Ascending aorta (tissue), 2 donors: ENCODE measurements at regions of chr14 and their contacts with region 1.

Region 1: GRCh38 chr14:53767566-53767965 is 189.1 kb downstream of the BMP4 start:
- DNase-seq: no peak
- H3K4me3 ChIP-seq: no peak overlapping the region
- H3K27ac ChIP-seq: no peak overlapping the region
- H3K4me1 ChIP-seq: no peaks in the 10 kb centered on the region
- H3K27me3 ChIP-seq: no peaks in the 10 kb centered on the region
- CTCF ChIP-seq: no peak

Region 2: DNA sequence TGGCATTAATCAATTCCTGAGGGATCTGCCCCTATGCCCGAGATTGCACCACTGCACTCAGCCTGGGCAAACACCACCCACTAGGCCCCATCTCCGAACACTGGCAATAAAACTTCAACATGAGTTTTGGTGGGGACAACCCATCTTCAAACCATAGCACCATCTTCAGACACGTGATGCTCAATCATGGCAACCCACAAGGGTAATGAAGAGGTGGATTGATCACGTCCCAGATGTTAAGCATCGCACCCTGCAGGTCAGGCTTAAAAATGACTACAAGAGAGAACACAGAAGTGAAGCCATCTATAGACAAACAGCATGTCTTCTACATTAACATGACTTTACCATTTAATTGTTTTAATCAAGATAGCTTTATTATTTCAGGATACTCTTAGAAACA is 571.6 kb before region 1 on chr14:
- intact Hi-C with region 1: no loop called
- DNase-seq: no peak
- H3K4me3 ChIP-seq: no peak overlapping the region
- H3K27ac ChIP-seq: no peak overlapping the region
- H3K4me1 ChIP-seq: no peaks in the 10 kb centered on the region
- H3K27me3 ChIP-seq: no peaks in the 10 kb centered on the region
- CTCF ChIP-seq: no peak

Region 3: DNA sequence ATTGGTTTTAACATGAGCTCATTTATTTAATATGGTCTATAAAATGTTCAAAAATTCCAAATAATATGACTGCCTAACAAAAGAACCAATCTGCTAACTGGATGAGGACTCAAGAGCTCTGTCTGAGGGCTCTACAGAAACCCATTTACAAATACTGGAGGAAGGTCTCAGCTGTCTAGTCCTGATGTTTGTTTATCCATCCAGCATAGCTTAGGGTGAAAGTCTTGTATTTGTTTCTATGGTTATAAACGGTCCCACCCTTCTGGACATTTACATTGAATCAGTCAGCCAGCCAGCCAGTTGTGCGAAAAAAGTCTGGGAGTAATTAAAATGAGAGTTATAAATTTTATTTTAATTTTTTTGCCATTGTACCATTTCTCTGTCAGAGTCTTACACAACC is 31.6 kb before region 1 on chr14:
- intact Hi-C with region 1: loop called (anchors 2 kb)
- DNase-seq: no peak
- H3K4me3 ChIP-seq: no peak overlapping the region
- H3K27ac ChIP-seq: no peak overlapping the region
- H3K4me1 ChIP-seq: no peaks in the 10 kb centered on the region
- H3K27me3 ChIP-seq: no peaks in the 10 kb centered on the region
- CTCF ChIP-seq: no peak